ENCODE measurements at regions of chr5 and their contacts with region 1.

Region 1: GRCh38 chr5:55923177-55923771 is 71.5 kb downstream of the IL6ST start:
- DNase-seq: peak; percentile 46
- ATAC-seq: peak; percentile 76
- H3K4me3 ChIP-seq: peak overlapping the region; percentile 62
- H3K27ac ChIP-seq: no peak overlapping the region
- H3K4me1 ChIP-seq: peaks cover 14% of the 10 kb centered on the region; the same call in 1 of the 2 replicates
- H3K27me3 ChIP-seq: no peaks in the 10 kb centered on the region
- CTCF ChIP-seq: no peak

Region 2: GRCh38 chr5:55407059-55407684 is 516.1 kb before region 1 on chr5:
- CTCF ChIA-PET with region 1: no interaction called
- POLR2A ChIA-PET with region 1: no interaction called
- intact Hi-C with region 1: loop called (anchors 10 kb)
- DNase-seq: peak; percentile 42
- ATAC-seq: peak; percentile 67
- H3K4me3 ChIP-seq: no peak overlapping the region
- H3K27ac ChIP-seq: no peak overlapping the region
- H3K4me1 ChIP-seq: no peaks in the 10 kb centered on the region
- H3K27me3 ChIP-seq: no peaks in the 10 kb centered on the region
- CTCF ChIP-seq: peak; percentile 75

Region 3: DNA sequence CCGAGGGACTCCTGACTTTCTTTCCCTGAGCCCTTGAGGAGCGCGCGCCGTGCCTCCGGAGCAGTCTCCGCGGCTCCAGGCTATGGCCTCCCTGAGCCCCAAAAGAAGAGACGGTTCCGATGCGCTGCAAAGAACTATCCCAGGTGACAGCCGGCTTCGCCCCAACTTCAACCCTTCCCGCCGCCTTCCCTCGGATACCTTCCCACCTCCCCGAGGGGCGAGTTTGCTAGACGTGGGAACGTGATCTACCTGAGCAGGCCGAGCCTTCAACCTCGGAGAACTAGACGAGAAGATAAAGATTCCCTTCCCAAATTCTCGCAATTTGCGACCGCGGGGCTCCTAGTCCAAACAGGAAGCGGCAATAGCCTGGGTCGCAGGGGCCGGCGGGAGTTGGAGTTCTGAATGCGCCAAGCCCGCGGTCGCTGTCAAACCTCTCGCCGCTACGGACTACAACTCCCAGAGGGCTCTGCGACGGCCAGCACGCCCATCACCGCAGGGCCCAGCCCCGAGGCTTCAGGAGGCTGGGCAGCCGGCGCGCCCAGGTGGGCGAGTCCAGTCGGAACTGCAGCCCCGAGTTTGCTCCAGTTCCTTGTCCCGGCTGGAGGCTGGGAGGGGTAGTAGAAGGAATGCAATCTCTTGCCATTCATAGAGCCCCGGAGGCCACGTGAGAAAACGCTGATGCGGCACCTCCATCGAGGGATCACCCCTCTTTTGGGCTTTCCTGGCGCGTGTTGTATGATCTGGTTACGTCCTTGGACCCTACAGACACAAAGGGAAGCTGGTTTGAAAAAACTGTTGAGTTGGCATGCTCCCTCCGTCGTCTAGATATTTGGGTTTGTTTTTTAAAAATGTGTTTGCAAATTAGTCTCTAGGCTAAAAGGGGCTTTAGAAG is 211.1 kb before region 1 on chr5 and contains the start of gene SLC38A9:
- CTCF ChIA-PET with region 1: interaction called, 3 read pairs
- POLR2A ChIA-PET with region 1: no interaction called
- intact Hi-C with region 1: loop called (anchors 5 kb)
- DNase-seq: peak; percentile 85
- ATAC-seq: peak; percentile 98
- H3K4me3 ChIP-seq: peak within 1 kb of the TSS; percentile 86
- H3K27ac ChIP-seq: no peak within 1 kb of the TSS
- H3K4me1 ChIP-seq: peaks cover 23% of the 10 kb centered on the region
- H3K27me3 ChIP-seq: no peaks in the 10 kb centered on the region
- CTCF ChIP-seq: no peak
- total RNA-seq, gene SLC38A9: 6.5 and 12.9 TPM in 2 replicates

Region 4: DNA sequence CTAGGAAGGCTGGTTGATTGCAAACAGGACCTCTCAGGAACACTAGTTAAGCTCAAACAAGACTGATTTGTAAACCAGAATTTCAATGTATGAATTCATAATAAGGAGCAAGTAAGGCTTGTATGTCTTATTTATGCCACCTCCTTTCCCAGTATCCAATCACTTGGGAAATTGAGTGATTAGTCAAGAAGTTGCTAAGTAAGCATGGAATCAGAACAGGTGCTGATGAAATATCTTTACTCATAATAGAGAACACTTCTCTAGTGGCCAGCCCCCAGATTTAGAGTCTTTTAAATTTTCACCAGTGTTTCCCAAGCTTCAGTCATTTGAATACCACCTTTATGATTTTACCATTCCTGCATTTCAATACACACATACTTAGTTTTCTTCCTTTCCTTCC is 190.7 kb before region 1 on chr5:
- CTCF ChIA-PET with region 1: no interaction called
- POLR2A ChIA-PET with region 1: no interaction called
- intact Hi-C with region 1: no loop called
- DNase-seq: no peak
- ATAC-seq: no peak
- H3K4me3 ChIP-seq: no peak overlapping the region
- H3K27ac ChIP-seq: no peak overlapping the region
- H3K4me1 ChIP-seq: no peaks in the 10 kb centered on the region
- H3K27me3 ChIP-seq: no peaks in the 10 kb centered on the region
- CTCF ChIP-seq: no peak

Region 5: DNA sequence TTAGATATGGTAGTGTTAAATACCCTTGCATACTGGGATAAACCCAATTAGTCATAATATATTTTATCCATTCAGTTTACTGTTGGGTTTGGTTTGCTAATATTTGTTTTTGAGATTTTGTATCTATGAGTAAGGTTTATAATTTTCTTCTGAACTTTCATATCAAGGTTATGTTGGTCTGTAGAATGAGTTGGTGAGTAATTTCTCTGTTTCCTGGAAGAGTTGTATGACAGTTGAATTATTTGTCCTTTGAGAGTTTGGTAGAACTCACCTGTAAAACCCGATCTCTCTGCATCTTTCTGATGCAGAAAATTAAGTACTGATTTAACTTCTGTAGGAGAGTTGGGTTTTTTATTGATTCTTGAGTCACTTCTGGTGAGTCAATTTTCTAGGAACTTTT is 165.0 kb before region 1 on chr5:
- CTCF ChIA-PET with region 1: no interaction called
- POLR2A ChIA-PET with region 1: no interaction called
- intact Hi-C with region 1: loop called (anchors 5 kb)
- DNase-seq: peak; percentile 77
- ATAC-seq: peak; percentile 78
- H3K4me3 ChIP-seq: no peak overlapping the region; the same call in 1 of the 2 replicates
- H3K27ac ChIP-seq: peak overlapping the region; percentile 90
- H3K4me1 ChIP-seq: peaks cover 36% of the 10 kb centered on the region
- H3K27me3 ChIP-seq: no peaks in the 10 kb centered on the region
- CTCF ChIP-seq: no peak

Region 6: GRCh38 chr5:55903121-55903701 is 20.1 kb before region 1 on chr5:
- CTCF ChIA-PET with region 1: no interaction called
- POLR2A ChIA-PET with region 1: no interaction called
- intact Hi-C with region 1: no loop called
- DNase-seq: no peak
- ATAC-seq: no peak
- H3K4me3 ChIP-seq: no peak overlapping the region
- H3K27ac ChIP-seq: no peak overlapping the region
- H3K4me1 ChIP-seq: peaks cover 4% of the 10 kb centered on the region; the same call in 1 of the 2 replicates
- H3K27me3 ChIP-seq: no peaks in the 10 kb centered on the region
- CTCF ChIP-seq: no peak